GM18951 (cell line): ENCODE measurements at regions of chr7 and their contacts with region 1.

Region 1: DNA sequence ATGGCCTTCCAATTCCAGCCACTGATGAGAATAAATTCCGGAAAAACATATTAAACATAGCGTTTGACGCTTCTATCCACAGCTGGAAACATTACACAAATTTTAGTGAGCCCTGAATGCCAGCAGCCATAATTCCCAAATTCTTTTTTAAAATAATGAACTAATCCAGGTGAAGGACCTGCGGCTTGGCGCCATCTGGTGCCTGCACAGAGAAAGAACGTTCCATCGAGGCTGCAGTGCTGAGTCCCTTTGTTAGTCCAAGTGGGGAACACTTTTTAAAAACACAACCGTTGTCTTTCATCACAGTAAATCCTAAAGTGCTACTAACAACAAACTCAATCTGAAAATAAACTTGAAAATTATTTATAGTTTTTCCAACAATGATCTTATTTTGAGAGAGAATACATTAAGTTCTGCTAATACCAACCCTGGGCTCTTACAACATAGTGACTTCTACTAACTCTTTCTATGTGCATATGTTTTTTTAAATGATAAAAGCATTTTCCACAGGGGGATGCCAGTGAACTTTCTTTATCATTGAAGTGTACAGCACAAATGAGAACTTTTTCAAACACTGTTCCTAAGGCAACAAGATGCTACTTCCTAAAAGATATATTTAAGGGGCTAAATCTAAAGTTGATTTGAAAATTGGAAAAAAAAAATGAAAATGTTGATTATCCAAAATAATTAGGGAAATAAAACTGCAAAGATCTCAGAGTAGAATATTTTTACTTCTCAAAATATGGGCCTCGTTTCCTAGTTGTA is 166.9 kb upstream of the RNF32 start:
- POLR2A ChIP-seq: no peak

Region 2: DNA sequence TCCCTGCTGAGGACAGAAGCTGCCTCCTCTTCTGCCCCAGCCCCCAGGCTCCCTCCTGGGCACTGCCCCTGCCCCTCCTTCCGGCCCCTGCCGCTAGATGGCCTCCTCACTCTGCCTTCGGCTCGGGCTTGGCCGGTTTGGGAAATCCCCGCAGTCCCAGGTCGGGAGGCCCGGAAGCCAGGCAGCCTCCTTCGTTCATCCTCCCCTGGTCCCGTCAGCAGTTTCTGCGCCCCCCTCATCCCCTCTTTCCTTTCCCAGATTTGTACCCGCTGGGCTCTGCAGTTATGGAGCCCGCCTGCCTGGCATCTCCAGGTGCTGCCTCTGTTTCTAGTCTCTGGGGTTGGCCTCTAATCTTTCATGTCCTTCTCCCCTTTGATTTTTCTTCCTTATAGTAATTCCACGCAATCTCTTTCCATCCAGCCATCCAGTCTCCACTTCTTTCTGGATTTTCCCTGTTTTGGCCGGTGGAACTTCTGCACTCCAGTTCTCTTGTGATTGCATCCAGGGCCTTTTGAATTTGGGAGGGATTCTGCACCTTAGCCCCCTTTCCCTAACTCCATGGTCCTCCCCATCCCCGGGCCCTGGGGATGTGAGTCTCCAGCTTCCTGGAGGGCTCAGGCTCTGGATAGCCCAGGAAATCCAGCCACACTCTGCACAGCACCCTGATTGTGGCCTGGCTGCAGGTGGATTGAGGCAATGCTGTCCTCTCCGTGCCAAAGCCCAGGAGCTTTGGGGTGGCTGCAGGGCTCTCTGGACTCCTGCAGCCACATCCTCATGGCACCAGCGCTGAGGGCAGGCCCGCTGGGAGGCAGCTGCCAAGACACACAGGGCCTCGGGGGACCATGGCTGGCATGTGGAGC is 658.1 kb before region 1 on chr7:
- in situ Hi-C with region 1: loop called (anchors 10 kb)
- POLR2A ChIP-seq: no peak

Region 3: GRCh38 chr7:156004265-156005201 is 469.1 kb before region 1 on chr7:
- in situ Hi-C with region 1: no loop called
- POLR2A ChIP-seq: no peak

Region 4: DNA sequence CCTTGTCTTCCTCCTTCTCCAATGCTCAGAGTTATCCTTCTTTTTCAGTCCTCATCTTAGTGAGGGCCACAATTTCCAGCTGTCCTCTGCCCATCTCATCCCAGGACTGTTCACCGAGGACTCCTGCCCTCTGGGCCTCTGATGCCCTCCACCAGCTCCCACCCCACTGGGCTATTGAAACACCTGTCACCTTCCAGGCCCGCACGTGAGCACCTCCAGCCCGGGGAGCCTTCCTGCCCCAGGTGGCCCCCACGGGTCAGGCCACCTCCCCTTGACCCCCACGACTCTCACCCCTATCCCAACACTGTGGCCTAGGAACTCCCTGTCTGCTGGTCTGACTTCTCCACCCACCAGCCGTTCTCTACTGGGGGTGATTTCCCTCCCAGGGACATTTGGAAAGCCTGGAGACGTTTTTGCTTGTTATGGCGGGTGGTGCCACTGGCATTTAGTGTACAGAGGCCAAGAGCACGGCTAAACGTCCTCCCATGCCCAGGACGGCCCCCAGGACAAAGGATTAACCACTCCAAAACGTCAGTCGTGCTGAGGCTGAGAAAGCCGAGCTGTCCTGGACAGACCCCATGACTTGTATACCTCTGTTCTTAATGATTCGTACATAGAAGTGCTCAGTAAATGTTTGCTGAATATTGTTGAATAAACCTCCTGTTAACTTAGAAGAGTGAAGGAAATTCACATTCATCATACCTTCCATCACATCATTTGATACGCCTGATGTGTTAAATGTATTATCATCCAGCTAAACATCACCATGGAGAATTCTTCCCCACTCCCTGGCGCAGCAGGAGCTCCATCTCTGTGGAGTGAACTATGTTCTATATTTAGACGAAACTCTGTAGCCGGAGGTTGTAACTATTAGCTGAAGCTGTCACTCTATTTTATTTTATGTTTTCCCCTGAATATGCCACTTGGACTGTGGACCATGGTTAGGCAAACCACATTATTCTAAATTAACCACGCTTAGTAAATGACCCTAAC is 391.3 kb before region 1 on chr7:
- in situ Hi-C with region 1: no loop called
- POLR2A ChIP-seq: no peak

Region 5: DNA sequence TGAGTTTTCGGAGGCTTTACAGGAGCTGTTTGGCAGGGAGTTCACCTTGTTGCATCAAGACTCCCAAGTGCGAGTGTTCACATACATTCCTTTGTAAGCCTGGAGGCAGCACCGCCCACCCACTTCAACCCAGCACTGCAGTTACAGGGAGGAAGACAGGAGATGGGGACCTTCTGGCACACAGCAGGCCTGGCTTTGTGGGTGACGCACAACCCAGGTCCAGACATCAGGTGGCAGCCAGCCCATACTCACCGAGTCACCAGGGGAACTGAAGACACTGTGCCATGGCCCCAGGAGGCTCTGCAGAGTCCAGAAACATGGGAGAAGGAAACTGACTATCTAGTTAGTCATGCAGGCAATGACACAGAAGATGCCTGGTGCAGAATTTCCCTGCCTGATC is 139.0 kb before region 1 on chr7:
- in situ Hi-C with region 1: no loop called
- POLR2A ChIP-seq: no peak